ENCODE measurements at regions of chr13 and their contacts with region 1.

Region 1: GRCh38 chr13:29801737-29802305 is 48.6 kb downstream of the UBL3 start:
- DNase-seq: no peak
- ATAC-seq: peak in 1 of 3 donors; percentile 52
- H3K4me3 ChIP-seq: no peak overlapping the region
- H3K4me3 Mint-ChIP-seq: no peak overlapping the region
- H3K27ac ChIP-seq: no peak overlapping the region
- H3K27ac Mint-ChIP-seq: peak overlapping the region in 1 of 2 donors; percentile 20
- H3K4me1 ChIP-seq: peaks cover 5% of the 10 kb centered on the region
- H3K4me1 Mint-ChIP-seq: peaks cover 22 to 25% of the 10 kb centered on the region in 2 donors
- H3K27me3 ChIP-seq: no peaks in the 10 kb centered on the region
- H3K27me3 Mint-ChIP-seq: no peaks in the 10 kb centered on the region
- CTCF ChIP-seq: no peak

Region 2: GRCh38 chr13:29771247-29771646 is 30.6 kb before region 1 on chr13:
- intact Hi-C with region 1: no loop called
- DNase-seq: peak in 1 of 2 donors; percentile 72
- ATAC-seq: peak in 2 of 3 donors; percentile 53 to 57
- H3K4me3 ChIP-seq: no peak overlapping the region
- H3K4me3 Mint-ChIP-seq: no peak overlapping the region
- H3K27ac ChIP-seq: no peak overlapping the region
- H3K27ac Mint-ChIP-seq: no peak overlapping the region
- H3K4me1 ChIP-seq: no peaks in the 10 kb centered on the region
- H3K4me1 Mint-ChIP-seq: no peaks in the 10 kb centered on the region
- H3K27me3 ChIP-seq: no peaks in the 10 kb centered on the region
- H3K27me3 Mint-ChIP-seq: no peaks in the 10 kb centered on the region
- CTCF ChIP-seq: peak; percentile 69

Region 3: GRCh38 chr13:29786698-29787097 is 15.1 kb before region 1 on chr13:
- intact Hi-C with region 1: loop called (anchors 2 kb)
- DNase-seq: no peak
- ATAC-seq: no peak
- H3K4me3 ChIP-seq: no peak overlapping the region
- H3K4me3 Mint-ChIP-seq: no peak overlapping the region
- H3K27ac ChIP-seq: no peak overlapping the region
- H3K27ac Mint-ChIP-seq: no peak overlapping the region
- H3K4me1 ChIP-seq: no peaks in the 10 kb centered on the region
- H3K4me1 Mint-ChIP-seq: peaks cover 31 to 37% of the 10 kb centered on the region in 2 donors
- H3K27me3 ChIP-seq: no peaks in the 10 kb centered on the region
- H3K27me3 Mint-ChIP-seq: no peaks in the 10 kb centered on the region
- CTCF ChIP-seq: no peak

Measured in natural killer cell (primary cell).